Testis (tissue), 5 donors: ENCODE measurements at regions of chr20 and their contacts with region 1.

Region 1: GRCh38 chr20:36144336-36144735 is 10.2 kb upstream of the EPB41L1 start:
- DNase-seq: no peak
- H3K4me3 ChIP-seq: no peak overlapping the region
- H3K27ac ChIP-seq: no peak overlapping the region
- H3K4me1 ChIP-seq: peaks cover 4% of the 10 kb centered on the region
- H3K27me3 ChIP-seq: no peaks in the 10 kb centered on the region
- CTCF ChIP-seq: no peak
- POLR2A ChIP-seq: no peak

Region 2: GRCh38 chr20:35954200-35954906 is 190.0 kb before region 1 on chr20 and contains the start of gene SCAND1:
- intact Hi-C with region 1: no loop called
- DNase-seq: peak; percentile 94
- H3K4me3 ChIP-seq: peak within 1 kb of the TSS; percentile 96 to 97
- H3K27ac ChIP-seq: peak within 1 kb of the TSS; percentile 95
- H3K4me1 ChIP-seq: peaks cover 19% of the 10 kb centered on the region
- H3K27me3 ChIP-seq: no peaks in the 10 kb centered on the region
- CTCF ChIP-seq: peak; percentile 88 to 93 (median 93)
- POLR2A ChIP-seq: no peak
- total RNA-seq, gene SCAND1: 120 to 136 TPM

Region 3: DNA sequence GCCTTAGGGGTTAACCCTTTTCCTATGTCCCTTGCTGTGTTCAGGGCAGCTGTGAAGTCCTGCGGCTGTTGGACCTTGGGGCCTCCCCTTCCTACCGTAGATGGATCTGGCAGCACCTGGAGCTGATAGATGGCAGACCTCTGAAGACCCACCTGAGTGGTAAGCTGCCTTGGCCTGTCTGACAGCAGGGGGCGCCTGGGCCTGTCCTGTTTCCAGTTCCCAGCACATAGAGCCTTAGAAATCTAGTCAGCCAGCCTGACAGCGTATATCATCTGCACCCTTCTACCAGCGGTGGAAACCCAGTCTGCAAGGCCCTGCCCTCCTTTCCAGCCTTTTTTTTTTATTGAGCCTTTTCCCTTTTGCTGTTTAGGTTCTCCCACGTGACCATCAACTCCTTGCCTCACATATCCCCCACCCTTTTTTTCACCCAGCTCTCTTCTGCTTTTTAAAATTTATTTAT is 149.3 kb before region 1 on chr20:
- intact Hi-C with region 1: loop called (anchors 5 kb)
- DNase-seq: peak; percentile 92
- H3K4me3 ChIP-seq: no peak overlapping the region
- H3K27ac ChIP-seq: no peak overlapping the region
- H3K4me1 ChIP-seq: peaks cover 4% of the 10 kb centered on the region
- H3K27me3 ChIP-seq: no peaks in the 10 kb centered on the region
- CTCF ChIP-seq: peak; percentile 78 to 80 (median 80)
- POLR2A ChIP-seq: no peak

Region 4: DNA sequence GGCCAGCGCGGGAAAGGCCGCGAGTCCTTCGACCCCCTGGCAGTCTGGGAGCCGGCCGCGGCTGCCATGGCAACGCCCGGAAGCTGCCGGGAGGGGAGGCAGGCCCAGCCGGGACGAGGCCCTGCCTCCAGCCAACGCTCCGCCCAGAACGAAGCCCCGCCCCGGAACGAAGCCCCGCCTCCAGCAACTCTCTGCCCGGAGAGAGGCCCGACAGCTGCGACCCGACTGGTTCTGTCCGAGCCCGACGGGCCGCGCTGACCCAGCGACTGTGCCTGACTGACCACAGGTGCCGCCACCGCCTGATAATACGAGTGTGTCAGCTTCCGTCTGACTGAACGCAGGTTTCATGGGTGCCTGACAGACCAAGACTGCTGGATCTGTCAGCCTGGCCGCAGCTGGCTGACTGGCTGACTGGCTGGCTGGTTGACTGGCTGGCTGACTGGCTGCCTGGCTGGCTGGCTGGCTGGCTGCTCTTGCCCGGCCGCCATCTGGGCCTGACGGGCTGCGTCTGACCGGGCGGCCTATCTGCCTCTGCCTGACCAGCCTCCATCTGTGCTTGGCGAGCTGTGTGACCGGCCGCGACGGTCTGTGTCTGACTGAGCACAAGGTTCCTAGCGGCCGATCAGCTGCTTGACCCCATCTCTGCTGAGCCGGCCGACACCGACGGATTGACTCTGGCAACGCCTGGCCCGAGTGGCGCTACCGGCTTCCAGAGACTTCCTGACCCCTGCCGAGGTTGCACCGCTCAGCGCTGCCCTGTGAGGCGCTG is 79.5 kb before region 1 on chr20:
- intact Hi-C with region 1: no loop called
- DNase-seq: peak; percentile 96
- H3K4me3 ChIP-seq: peak overlapping the region; percentile 65
- H3K27ac ChIP-seq: peak overlapping the region; percentile 43 to 81
- H3K4me1 ChIP-seq: peaks cover 5% of the 10 kb centered on the region
- H3K27me3 ChIP-seq: no peaks in the 10 kb centered on the region
- CTCF ChIP-seq: peak in 1 of 3 experiments; percentile 6
- POLR2A ChIP-seq: peak; percentile 73

Region 5: DNA sequence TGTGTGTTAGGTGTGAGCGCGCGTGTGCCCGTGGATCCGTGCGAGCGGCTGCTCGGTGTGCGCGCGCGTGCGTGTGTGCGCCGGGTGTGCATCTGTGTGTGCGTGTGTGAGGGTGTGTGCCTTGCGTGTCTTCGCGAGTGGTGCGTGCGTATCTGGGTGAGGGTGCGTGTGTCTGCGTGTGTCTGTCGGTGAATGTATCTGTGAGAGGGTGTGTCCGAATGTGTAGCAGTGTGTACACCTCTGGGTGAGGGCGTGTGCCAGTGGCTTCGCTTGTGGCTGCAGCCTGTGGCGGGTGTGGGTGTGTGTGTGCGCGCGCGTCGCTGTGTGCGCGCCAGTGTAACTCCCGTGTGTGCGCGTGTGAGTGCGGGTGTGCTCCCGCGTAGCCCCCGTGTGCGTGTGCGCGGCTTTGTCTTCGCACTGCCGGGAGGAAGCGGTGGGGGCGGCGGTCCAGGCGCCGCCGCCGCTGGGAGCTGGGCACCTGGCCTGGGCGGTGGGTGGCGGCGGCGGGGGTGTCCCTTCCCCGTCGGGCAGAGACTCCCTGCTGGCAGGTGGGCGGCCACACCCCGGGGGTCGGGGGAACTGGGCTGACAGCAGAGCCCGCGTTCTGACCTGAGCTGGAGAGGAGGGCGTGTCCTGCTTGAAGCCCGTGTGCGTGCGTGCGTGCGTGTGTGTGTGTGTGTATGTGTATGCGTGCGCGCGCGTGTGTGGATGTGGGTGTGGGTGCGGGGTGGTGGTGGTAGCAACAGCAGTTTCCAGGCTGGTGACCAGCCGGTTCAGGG is 51.1 kb before region 1 on chr20:
- intact Hi-C with region 1: no loop called
- DNase-seq: peak; percentile 62
- H3K4me3 ChIP-seq: peak overlapping the region; percentile 57 to 79
- H3K27ac ChIP-seq: peak overlapping the region; percentile 12 to 43
- H3K4me1 ChIP-seq: peaks cover 16% of the 10 kb centered on the region
- H3K27me3 ChIP-seq: no peaks in the 10 kb centered on the region
- CTCF ChIP-seq: no peak
- POLR2A ChIP-seq: no peak